G401 (cell line): ENCODE measurements at regions of chr16 and their contacts with region 1.

Region 1: DNA sequence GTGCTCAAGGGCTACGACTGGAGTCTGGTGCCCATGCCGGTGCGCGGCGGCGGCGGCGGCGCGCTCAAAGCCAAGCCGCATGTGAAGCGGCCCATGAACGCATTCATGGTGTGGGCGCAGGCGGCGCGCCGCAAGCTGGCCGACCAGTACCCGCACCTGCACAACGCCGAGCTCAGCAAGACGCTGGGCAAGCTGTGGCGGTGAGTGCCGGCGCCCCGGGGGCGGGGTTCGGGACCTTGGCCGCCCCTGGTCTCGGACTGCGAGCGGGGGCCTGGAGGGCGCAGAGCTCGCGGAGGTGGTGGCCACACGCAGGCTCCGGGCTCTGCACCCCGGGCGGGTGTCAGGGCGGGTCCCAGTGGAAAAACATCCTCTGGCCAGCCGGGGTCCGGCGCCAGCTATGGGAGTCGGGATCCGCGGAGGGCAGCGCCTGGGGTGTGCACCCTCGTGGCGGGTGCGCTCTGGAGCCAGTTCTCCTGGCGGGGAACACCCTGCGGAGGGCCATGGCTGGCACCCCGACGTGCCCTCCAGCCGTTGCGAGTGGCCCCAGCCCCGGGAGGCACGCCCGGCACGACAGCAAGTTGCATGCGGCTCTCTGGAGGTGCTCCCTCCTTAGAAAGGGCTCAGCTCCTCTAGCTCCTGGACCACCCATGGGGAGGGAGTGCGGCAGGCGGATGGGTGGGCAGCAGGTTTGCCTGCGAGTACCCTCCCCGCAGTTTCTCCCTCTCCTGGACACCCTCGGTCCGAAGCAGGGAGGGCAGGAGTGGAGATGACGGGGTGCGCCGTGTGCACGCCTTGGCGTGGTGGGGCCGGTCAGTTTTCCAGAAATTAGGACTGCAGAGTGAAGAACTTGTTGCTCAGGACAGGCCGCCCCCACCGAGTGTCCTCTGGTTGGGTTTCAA is 824 bp downstream of the SOX8 start:
- DNase-seq: no peak

Region 2: DNA sequence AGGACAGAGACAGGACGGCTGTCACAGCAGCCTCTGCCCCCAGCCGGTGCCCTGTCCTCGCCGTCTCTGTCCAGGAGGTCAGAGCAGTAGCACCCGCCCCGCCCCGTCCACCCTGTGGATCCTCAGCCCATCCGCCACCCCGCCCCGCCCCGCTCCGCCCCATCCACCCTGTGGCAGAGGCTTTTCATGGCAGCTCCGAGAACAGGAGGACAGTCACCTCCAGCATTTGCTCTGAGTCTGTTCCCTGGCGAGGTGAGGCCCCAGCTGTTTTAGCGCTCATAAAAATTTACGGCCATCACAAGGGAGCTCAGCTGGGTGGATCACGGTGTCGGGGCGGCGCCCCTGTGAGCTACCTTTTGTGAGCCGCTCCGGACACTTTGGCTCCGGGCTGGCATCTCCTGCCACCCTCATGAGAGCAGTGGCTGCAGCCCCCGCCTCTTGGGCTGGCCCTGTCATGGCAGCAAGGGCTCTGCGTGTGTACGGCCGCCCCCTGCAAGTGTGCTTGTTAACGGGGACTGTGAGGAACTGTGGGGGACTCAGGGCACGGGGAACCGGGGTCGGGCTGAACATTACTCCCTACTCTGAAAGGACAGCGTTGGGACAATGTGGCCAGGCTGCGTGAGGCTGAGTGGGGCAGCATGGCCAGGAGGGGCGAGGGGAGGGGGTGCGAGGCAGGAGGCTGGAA is 149.6 kb before region 1 on chr16:
- in situ Hi-C with region 1: loop called (anchors 5 kb)
- DNase-seq: no peak

Region 3: GRCh38 chr16:914440-914839 is 68.0 kb before region 1 on chr16:
- in situ Hi-C with region 1: loop called (anchors 10 kb)
- DNase-seq: no peak

Region 4: DNA sequence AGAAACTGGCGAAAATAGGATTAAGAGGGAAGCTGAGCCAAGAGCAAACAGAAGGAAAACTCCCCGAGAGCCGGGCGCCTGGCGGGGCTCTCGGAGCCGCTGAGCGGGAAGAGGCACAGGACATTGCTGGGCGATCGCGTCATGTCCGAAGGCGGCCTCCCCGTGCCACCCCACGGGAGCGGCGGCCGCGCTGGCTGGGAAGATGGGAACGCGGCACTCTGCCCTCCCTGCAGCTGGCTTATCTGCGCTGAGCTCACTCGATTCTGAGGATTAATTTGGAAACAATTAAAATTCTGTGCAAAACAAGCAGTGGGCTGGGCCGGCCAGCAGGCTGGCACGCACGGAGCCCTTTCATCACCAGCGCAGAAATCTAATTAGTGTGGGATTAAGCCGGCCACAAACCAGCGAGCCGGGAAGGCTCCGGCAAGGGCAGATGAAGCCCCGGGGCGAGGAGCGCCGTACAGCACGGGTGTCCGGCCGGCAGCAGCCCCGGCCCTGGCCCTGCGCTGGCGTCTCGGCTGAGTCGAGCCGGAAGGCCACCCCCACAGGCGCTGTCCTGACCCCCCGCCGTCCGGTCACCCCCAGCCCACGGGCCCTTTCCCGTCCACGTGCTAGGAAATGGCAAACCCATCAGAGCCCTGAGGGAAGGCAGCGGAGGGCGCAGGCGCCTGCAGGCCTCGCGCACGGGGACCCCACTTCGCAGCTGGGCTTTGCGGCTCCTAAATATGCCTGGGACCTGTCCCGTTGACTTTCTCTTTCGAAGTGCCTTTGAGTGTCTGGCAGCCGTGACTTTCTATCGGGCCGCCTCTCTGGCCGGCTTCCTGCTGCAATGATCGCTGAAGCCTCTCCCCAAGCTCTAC is 37.1 kb after region 1 on chr16:
- in situ Hi-C with region 1: no loop called
- DNase-seq: peak; percentile 43

Region 5: GRCh38 chr16:1036726-1037393 is 54.5 kb after region 1 on chr16:
- in situ Hi-C with region 1: loop called (anchors 5 kb)
- DNase-seq: no peak

Region 6: DNA sequence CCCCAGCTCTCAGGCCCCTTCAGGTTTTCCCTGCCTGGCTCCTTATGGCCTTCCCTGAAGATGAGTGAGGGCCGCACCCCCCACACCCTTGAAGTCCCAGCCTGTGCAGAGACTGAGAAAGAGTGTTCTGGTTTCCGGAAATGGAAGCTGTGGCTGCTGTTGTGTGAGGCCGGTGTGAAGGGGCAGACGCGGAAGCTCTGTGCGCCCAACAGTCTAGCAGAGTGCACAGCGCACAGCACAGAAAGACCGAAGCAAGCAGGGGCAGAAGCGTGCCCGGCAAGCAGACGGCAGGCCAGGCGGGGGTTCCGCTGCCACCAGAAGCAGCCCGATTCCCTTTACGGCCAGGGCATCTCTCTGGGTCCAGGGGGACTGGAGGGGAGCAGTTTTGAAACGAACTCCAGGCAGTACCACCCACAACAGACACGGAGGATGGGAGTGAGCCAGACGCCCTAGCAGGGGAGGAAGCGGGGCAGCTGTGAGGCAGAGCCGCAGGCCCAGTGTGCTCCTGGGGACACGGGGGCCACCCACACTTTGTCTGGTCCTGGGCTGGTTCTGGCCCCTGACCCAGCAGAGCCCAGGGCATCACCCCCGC is 225.9 kb after region 1 on chr16:
- in situ Hi-C with region 1: no loop called
- DNase-seq: no peak